AG04449 (cell line): ENCODE measurements at regions of chr1 and their contacts with region 1.

Region 1: GRCh38 chr1:181142096-181142958 is 53.8 kb downstream of the IER5 start:
- DNase-seq: peak; percentile 36
- H3K4me3 ChIP-seq: peak overlapping the region; percentile 43
- CTCF ChIP-seq: peak; percentile 98

Region 2: DNA sequence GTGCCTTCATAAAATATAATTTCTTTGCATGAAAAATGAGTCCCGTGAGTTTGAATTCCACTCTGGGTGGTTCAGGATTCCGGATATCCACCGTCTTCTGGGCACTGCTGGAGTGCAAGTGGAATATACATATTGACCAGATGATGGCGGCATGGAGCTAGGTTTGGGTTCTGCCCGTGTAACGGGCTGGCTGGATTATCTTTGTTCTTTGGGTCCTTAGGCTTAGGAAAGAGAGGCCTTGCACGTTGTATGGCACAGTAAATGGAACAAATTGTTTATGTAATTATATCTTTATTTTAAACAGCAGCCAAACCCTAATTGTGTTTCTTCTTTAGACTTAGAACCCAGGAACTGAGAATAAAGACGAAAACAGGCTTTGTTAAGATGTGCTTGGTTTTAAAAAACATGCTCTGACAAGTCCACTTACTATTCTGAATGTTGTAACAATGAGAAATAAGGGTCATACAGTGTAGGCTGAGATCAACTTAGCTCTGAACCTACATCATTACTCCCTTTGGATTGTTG is 626.4 kb before region 1 on chr1:
- CTCF ChIA-PET with region 1: interaction called, 12 read pairs
- POLR2A ChIA-PET with region 1: no interaction called
- DNase-seq: no peak
- H3K4me3 ChIP-seq: no peak overlapping the region
- CTCF ChIP-seq: peak; percentile 68

Region 3: GRCh38 chr1:180745098-180745497 is 397.2 kb before region 1 on chr1:
- CTCF ChIA-PET with region 1: no interaction called
- POLR2A ChIA-PET with region 1: no interaction called
- DNase-seq: no peak
- H3K4me3 ChIP-seq: no peak overlapping the region
- CTCF ChIP-seq: no peak

Region 4: GRCh38 chr1:180791806-180792205 is 350.5 kb before region 1 on chr1:
- CTCF ChIA-PET with region 1: no interaction called
- POLR2A ChIA-PET with region 1: no interaction called
- DNase-seq: no peak
- H3K4me3 ChIP-seq: no peak overlapping the region
- CTCF ChIP-seq: no peak

Region 5: GRCh38 chr1:180954005-180954800 is 188.1 kb before region 1 on chr1:
- CTCF ChIA-PET with region 1: interaction called, 11 read pairs
- POLR2A ChIA-PET with region 1: no interaction called
- DNase-seq: no peak
- H3K4me3 ChIP-seq: peak overlapping the region; percentile 57
- CTCF ChIP-seq: no peak

Region 6: GRCh38 chr1:181016563-181016962 is 125.8 kb before region 1 on chr1:
- CTCF ChIA-PET with region 1: interaction called, 46 read pairs
- POLR2A ChIA-PET with region 1: interaction called, 3 read pairs
- DNase-seq: no peak
- H3K4me3 ChIP-seq: no peak overlapping the region
- CTCF ChIP-seq: no peak

Region 7: GRCh38 chr1:181077576-181078242 is 64.6 kb before region 1 on chr1:
- CTCF ChIA-PET with region 1: interaction called, 148 read pairs
- POLR2A ChIA-PET with region 1: interaction called, 6 read pairs
- DNase-seq: no peak
- H3K4me3 ChIP-seq: no peak overlapping the region
- CTCF ChIP-seq: no peak

Region 8: GRCh38 chr1:181128592-181129497 is 13.5 kb before region 1 on chr1:
- CTCF ChIA-PET with region 1: interaction called, 18 read pairs
- POLR2A ChIA-PET with region 1: no interaction called
- DNase-seq: no peak
- H3K4me3 ChIP-seq: no peak overlapping the region
- CTCF ChIP-seq: no peak